Activated naive CD8-positive, alpha-beta T cell treated with anti-CD3 and anti-CD28 coated beads, Interleukin-2, amount 10 ng/mL, durations not matched to agents 7 days and 5 days (primary cell): ENCODE measurements at regions of chr6 and their contacts with region 1.

Region 1: GRCh38 chr6:157021344-157021992 is 244.3 kb downstream of the ARID1B start:
- DNase-seq: peak; percentile 93
- ATAC-seq: peak; percentile 90
- H3K4me3 Mint-ChIP-seq: peak overlapping the region; percentile 88
- H3K27ac Mint-ChIP-seq: peak overlapping the region; percentile 98
- H3K4me1 Mint-ChIP-seq: peaks cover 38% of the 10 kb centered on the region
- H3K27me3 Mint-ChIP-seq: no peaks in the 10 kb centered on the region

Region 2: DNA sequence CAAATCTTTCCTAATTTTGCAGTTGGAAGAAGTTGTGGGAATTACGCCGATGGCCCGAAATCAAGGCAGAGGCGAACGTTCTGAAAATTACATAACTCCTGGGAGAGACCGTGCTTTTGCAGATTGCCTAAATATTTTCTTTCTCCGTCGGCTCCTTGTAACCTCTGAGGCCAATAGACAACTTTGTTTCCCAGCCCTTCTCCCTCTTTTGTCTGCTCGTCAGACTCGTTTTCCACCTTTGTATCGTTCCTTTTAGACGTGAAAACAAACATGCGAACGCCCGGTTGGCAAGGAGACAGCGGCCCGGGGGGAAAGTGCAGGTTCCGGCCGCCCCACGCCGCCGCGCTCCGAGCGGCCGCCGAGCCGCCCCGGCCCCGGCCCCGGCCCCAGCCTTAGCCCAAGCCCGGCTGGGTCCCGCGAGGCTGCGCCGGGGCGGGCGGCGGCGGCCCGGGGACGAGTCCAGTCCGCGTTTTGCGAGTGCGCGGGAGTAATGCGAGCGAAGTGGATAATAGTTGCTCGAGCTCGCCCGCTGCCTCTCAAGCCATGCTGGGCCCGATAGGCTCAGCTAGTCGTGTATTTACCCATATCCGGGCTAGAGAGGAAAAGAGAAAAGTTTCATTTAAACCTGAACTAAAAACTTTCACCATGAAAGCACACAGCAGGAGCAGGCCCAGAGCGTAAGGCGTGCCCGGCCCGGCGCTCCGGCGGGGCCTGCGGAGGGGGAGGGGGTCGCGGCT is 244.5 kb before region 1 on chr6 and contains the start of gene ARID1B:
- POLR2A ChIA-PET with region 1: interaction called, 46 read pairs
- DNase-seq: peak; percentile 82
- ATAC-seq: peak; percentile 40
- H3K4me3 Mint-ChIP-seq: peak within 1 kb of the TSS; percentile 95
- H3K27ac Mint-ChIP-seq: peak within 1 kb of the TSS; percentile 98
- H3K4me1 Mint-ChIP-seq: peaks cover 23% of the 10 kb centered on the region
- H3K27me3 Mint-ChIP-seq: peaks cover 2% of the 10 kb centered on the region
- total RNA-seq, gene ARID1B: 83.2 to 98.2 TPM

Region 3: GRCh38 chr6:157034436-157035230 is 13.2 kb after region 1 on chr6:
- POLR2A ChIA-PET with region 1: interaction called, 10 read pairs
- DNase-seq: no peak
- ATAC-seq: peak; percentile 68
- H3K4me3 Mint-ChIP-seq: peak overlapping the region; percentile 45
- H3K27ac Mint-ChIP-seq: no peak overlapping the region
- H3K4me1 Mint-ChIP-seq: peaks cover 12% of the 10 kb centered on the region
- H3K27me3 Mint-ChIP-seq: no peaks in the 10 kb centered on the region

Region 4: GRCh38 chr6:157054531-157054979 is 33.1 kb after region 1 on chr6:
- POLR2A ChIA-PET with region 1: interaction called, 18 read pairs
- DNase-seq: peak; percentile 42
- ATAC-seq: peak; percentile 95
- H3K4me3 Mint-ChIP-seq: peak overlapping the region; percentile 74
- H3K27ac Mint-ChIP-seq: peak overlapping the region; percentile 91
- H3K4me1 Mint-ChIP-seq: peaks cover 32% of the 10 kb centered on the region
- H3K27me3 Mint-ChIP-seq: no peaks in the 10 kb centered on the region